Activated CD4-positive, alpha-beta T cell treated with anti-CD3 and anti-CD28 coated beads for 36 hours (primary cell): ENCODE measurements at regions of chr19 and their contacts with region 1.

Region 1: DNA sequence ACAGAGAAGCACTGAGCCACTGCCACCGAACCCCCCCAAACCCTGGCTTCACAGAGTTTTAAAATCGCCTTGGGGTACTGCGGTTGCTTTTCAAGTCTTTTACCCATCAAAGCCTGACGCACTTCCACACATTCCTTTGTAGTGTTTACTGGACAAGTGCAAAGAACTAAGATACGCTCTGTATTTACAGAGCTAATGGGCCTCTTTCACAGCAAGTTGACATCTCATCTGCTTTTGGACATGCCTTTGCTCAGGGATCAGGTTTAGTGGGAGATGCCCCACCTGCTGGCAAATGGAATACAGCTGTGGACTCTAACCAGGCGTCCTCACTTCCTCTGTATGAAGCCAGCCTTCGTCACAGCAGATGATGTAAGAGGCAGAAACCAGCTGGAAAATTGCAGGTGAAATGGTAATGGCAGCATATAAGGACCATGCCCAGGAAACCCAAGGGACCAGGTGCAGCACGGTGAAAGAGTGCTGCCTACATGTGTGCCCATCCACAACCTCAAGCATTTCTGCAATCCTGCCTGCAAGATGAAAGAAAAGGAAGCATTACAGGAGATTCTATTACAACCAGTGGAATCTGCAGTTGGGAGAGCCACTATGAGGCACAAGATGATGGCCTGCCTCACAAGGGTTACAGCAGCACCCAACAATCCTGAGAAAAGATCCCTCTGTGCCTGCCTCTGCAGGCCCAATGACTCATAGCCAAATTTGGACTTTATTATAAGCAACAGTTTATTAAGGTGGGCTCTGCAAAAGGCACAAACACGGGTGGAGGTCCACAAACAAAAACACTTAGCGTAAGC is 34.7 kb downstream of the BRD4 start:
- DNase-seq: peak; percentile 55
- ATAC-seq: no peak
- H3K4me3 Mint-ChIP-seq: peak overlapping the region; percentile 30
- H3K27ac Mint-ChIP-seq: peak overlapping the region; percentile 91
- H3K4me1 Mint-ChIP-seq: peaks cover 97% of the 10 kb centered on the region
- H3K27me3 Mint-ChIP-seq: no peaks in the 10 kb centered on the region

Region 2: GRCh38 chr19:14686411-14686810 is 611.2 kb before region 1 on chr19:
- CTCF ChIA-PET with region 1: no interaction called
- POLR2A ChIA-PET with region 1: no interaction called
- intact Hi-C with region 1: no loop called
- DNase-seq: peak; percentile 64
- ATAC-seq: no peak
- H3K4me3 Mint-ChIP-seq: no peak overlapping the region
- H3K27ac Mint-ChIP-seq: no peak overlapping the region
- H3K4me1 Mint-ChIP-seq: peaks cover 12% of the 10 kb centered on the region
- H3K27me3 Mint-ChIP-seq: peaks cover 4% of the 10 kb centered on the region

Region 3: DNA sequence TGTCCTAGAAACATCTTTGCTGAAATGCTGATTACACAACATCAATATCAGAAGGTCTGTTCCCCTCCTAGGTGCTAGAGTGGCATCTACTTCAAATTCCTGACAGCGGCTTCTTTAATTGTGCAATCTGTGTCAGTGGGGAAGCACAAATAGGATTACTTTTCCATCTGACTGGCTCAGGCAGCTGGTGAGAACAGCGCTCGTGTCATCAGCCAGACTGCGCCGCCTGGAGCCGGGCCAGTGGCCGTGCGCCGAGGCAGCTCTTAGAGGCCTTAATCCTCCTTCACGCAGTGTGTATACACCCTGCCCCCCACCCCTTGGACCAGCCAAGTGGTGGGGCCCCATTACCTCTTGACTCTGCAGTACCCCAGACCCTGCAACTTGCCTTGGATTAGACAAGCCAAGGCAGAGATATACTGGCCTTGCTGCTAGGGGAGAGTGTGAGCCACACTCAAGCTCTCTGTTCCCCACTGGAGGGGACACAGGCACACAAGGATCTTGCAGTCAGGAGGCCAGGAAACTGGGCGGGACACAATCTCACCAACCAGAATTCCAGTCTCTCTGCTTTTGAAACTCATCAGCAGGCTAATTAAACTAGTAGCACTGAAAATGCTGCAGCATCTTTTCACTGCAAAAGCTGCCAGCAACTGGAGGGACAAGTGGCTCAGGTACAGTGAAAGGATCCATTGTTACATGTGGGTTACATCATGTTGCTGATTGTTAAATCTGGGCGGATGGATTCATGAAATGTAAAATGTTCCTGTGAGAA is 16.5 kb before region 1 on chr19:
- CTCF ChIA-PET with region 1: interaction called, 12 read pairs
- POLR2A ChIA-PET with region 1: interaction called, 4 read pairs
- intact Hi-C with region 1: loop called (anchors 1 to 2 kb)
- DNase-seq: no peak
- ATAC-seq: no peak
- H3K4me3 Mint-ChIP-seq: no peak overlapping the region
- H3K27ac Mint-ChIP-seq: peak overlapping the region; percentile 84
- H3K4me1 Mint-ChIP-seq: peaks cover 89% of the 10 kb centered on the region
- H3K27me3 Mint-ChIP-seq: no peaks in the 10 kb centered on the region

Region 4: DNA sequence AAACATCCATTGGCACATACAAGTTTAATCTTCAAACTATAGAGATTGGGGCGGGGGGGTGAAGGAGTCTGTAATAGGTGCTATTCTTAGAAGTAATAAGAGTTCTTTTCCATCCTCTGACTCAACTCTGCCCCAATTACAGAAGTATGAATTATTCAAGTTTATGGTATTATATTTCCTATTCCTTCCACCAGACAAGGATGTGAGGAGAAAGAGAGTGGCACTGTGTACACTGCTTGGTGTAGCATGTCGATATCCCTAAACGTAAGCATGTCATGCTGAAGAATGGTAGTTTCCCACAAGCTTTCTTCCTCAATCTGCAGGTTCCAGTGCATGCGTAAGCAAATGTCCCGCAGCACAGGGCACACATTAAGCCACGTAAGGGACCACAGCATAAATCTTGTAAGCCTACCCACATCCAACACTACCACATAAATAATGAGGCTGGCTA is 20.6 kb after region 1 on chr19:
- CTCF ChIA-PET with region 1: interaction called, 5 read pairs
- POLR2A ChIA-PET with region 1: interaction called, 8 read pairs
- intact Hi-C with region 1: loop called (anchors 2 kb)
- DNase-seq: no peak
- ATAC-seq: peak; percentile 47
- H3K4me3 Mint-ChIP-seq: peak overlapping the region; percentile 5
- H3K27ac Mint-ChIP-seq: peak overlapping the region; percentile 82
- H3K4me1 Mint-ChIP-seq: peaks cover 83% of the 10 kb centered on the region
- H3K27me3 Mint-ChIP-seq: no peaks in the 10 kb centered on the region